Aorta (tissue), 5 donors: ENCODE measurements at regions of chr3 and their contacts with region 1.

Region 1: GRCh38 chr3:152574461-152575079 is 260.4 kb upstream of the P2RY1 start:
- DNase-seq: peak in 1 of 2 donors; percentile 59
- ATAC-seq: peak; percentile 76
- H3K4me3 ChIP-seq: no peak overlapping the region
- H3K27ac ChIP-seq: no peak overlapping the region
- H3K4me1 ChIP-seq: no peaks in the 10 kb centered on the region
- H3K27me3 ChIP-seq: no peaks in the 10 kb centered on the region

Region 2: GRCh38 chr3:152477422-152477821 is 97.1 kb before region 1 on chr3:
- intact Hi-C with region 1: loop called in 1 of 2 experiments (anchors 5 kb)
- DNase-seq: no peak
- ATAC-seq: no peak
- H3K4me3 ChIP-seq: no peak overlapping the region
- H3K27ac ChIP-seq: peak overlapping the region in 1 of 2 donors; percentile 28
- H3K4me1 ChIP-seq: peaks cover 4% of the 10 kb centered on the region in 2 donors
- H3K27me3 ChIP-seq: no peaks in the 10 kb centered on the region